Right ventricle myocardium inferior (tissue), 1 donor: ENCODE measurements at regions of chr4 and their contacts with region 1.

Region 1: DNA sequence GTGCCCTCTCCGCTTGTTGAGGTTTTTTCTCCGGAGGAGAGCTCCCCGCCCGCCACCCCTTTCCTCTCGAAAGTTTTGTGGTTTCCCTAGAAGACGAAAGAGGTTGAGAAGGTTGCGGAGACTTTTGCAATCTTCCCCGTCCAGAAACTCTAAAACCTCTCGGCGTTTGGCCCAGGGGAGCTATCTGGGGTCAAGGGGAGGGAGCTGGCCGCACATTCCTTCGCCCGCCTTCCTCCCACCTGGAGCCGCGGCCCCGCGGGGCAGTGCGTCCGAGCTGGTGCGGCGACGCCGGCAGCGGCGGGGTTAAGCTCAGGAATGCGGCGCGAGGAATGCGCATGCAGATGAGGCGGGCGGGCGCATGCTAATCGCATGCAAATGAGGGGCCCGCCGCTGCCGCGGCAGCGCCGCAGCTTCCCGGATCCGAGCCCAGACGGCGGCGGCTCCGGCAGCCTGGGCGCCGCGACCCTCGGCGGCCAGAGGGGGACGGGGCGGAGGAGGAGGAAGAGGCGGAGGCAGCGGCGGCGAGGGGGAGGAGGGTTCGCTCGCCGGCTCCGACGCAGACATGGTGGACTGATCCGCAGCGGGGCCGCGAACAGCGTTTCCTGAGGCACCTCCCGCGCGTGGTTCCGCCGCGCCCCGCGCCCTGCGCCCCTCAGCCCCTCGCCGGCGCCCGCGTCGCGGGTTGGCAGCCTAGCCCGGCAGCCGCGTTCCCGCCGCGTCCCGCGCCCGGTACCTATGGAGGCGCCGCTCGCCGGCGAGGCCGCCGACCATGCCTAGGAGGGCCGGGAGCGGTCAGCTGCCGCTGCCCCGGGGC is at the start of gene WWC2:
- DNase-seq: peak; percentile 95
- ATAC-seq: peak; percentile 94
- total RNA-seq, gene WWC2: 30.2 TPM

Region 2: DNA sequence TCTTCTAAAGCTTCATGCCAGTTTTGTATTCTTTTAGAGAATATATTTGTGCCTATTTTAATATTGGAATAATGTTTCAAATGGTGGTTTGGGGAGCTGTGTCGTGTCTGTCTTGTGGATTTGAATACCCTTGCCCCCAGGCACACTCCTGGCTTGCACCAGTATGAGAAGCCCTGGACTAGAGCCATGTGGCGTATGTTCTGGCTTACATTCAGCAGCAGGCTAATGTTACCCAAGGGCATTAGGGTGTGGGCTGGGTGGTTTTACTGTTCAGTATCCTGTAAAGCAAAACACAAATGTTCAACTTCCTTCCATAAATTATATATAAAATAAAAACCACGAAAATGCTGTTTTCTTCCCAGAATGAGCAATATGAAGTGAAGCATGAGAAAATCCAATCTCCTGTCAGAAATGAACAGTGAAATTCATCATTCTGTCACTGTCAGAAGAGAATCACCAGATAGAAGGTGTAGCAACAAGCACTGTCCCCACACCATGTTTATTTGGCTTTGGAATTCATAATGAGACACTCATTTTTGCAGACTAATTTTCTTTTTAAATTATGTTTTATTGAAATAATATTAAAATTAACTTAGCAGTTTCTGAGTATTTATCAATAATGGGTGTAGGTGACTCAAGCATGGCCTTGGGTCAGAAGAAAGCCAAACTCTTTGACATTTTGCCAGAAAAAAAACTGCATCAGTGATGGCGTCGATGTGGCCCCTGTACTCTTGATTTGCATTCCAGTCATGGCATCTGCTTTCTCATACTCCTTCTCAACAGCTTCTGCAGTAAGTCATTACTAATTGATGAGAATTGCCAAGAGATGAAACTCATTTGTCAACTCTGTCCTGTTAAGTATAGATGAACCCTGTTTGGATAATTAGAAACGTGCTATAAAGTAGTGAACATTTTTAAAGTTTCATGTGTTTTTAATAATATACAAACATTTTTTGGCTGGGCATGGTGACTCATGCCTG is 43.9 kb after region 1 on chr4:
- intact Hi-C with region 1: loop called (anchors 2 kb)
- DNase-seq: peak; percentile 76
- ATAC-seq: peak; percentile 87

Region 3: GRCh38 chr4:183173580-183174526 is 74.9 kb after region 1 on chr4:
- intact Hi-C with region 1: loop called (anchors 5 kb)
- DNase-seq: no peak
- ATAC-seq: peak; percentile 24

Region 4: GRCh38 chr4:183602557-183603027 is 503.7 kb after region 1 on chr4:
- intact Hi-C with region 1: no loop called
- DNase-seq: no peak
- ATAC-seq: no peak